Cardiac septum (tissue), 1 donor: ENCODE measurements at regions of chr10 and their contacts with region 1.

Region 1: DNA sequence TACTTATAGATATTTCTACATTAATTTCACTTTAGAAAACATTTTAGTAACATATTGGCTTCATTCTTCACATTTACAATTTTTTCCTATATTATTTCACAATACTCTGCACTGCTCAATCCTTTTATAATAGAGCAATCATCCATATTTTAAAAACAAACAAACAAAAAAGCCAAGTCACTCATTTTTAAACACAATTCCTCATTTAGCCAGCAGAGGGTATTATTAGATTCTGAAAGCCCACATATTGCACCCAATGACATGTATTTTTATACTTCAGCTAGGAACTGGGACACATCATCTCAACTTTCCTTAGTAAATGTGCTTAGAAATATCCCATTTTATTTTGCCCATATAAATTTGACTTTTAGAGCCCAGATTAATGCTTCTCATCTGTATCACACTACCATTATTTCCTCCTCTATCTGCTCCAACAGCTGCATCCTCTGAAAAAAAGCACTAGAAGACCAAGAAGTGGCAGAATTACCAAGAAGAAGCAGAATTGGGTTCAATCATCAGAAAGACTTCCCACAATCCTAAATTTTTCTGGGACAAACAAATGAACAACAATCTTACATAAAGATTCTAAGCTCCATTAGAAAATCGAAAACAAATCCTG is 29.5 kb downstream of the CTNNA3 start:
- DNase-seq: no peak

Region 2: GRCh38 chr10:67764012-67764822 is 97.7 kb after region 1 on chr10:
- intact Hi-C with region 1: loop called (anchors 5 kb)
- DNase-seq: peak; percentile 94